ENCODE measurements at regions of chr7 and their contacts with region 1.

Region 1: DNA sequence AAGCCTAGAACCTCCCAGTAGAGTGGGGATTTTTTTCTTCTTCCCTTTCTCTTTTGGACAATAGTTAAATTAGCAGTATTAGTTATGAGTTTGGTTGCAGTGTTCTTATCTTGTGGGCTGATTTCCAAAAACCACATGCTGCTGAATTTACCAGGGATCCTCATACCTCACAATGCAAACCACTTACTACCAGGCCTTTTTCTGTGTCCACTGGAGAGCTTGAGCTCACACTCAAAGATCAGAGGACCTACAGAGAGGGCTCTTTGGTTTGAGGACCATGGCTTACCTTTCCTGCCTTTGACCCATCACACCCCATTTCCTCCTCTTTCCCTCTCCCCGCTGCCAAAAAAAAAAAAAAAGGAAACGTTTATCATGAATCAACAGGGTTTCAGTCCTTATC is 5.4 kb downstream of the OPN1SW start:
- DNase-seq: no peak
- H3K4me3 ChIP-seq: no peak overlapping the region
- H3K27ac ChIP-seq: no peak overlapping the region
- H3K4me1 ChIP-seq: no peaks in the 10 kb centered on the region
- H3K27me3 ChIP-seq: no peaks in the 10 kb centered on the region

Region 2: GRCh38 chr7:128755819-128756476 is 14.3 kb before region 1 on chr7:
- CTCF ChIA-PET with region 1: interaction called, 11 read pairs
- POLR2A ChIA-PET with region 1: no interaction called
- DNase-seq: no peak
- H3K4me3 ChIP-seq: no peak overlapping the region
- H3K27ac ChIP-seq: no peak overlapping the region
- H3K4me1 ChIP-seq: no peaks in the 10 kb centered on the region
- H3K27me3 ChIP-seq: no peaks in the 10 kb centered on the region

Measured in common myeloid progenitor, CD34-positive (primary cell).